ENCODE measurements at regions of chr22 and their contacts with region 1.

Region 1: DNA sequence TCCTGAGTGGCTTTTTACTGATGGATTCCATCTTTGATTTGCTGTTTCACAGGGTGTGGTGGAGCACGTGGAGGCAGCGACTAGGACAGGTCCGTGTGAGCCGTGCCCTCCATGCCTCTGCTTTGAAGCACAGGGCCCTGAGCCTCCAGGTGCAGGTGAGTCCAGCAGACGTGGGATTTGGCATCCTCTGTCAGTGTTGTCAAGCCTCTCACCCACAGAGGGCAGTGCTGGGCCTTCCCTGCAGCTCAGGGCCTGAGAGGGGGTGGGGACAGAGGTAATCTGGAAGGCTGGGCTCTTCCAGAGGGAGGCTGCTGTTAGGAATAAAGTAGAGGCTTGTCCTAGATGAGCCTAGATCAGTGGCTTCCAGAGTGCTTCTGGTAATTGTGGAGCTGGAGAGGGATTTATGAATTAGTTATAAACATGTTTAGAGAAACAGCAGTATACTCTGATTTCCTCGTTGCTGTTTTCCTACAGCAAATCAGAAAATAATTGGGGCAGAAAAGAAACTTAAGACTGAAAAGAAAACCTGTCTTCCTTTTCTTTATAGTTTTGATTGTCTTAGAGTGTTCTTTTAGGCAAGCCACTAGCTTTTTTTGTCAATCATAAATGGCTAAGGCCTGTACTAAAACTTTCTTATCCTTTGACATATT is 65.0 kb downstream of the SFI1 start:
- DNase-seq: peak; percentile 86
- H3K4me3 Mint-ChIP-seq: no peak overlapping the region
- H3K27ac Mint-ChIP-seq: peak overlapping the region; percentile 71
- H3K4me1 Mint-ChIP-seq: peaks cover 12% of the 10 kb centered on the region
- H3K27me3 Mint-ChIP-seq: no peaks in the 10 kb centered on the region

Region 2: GRCh38 chr22:31595271-31595670 is 33.9 kb after region 1 on chr22:
- intact Hi-C with region 1: loop called (anchors 5 kb)
- DNase-seq: no peak
- H3K4me3 Mint-ChIP-seq: no peak overlapping the region
- H3K27ac Mint-ChIP-seq: peak overlapping the region; percentile 4
- H3K4me1 Mint-ChIP-seq: no peaks in the 10 kb centered on the region
- H3K27me3 Mint-ChIP-seq: no peaks in the 10 kb centered on the region

Region 3: GRCh38 chr22:31635638-31636306 is 74.4 kb after region 1 on chr22:
- intact Hi-C with region 1: loop called (anchors 2 kb)
- DNase-seq: peak; percentile 58
- H3K4me3 Mint-ChIP-seq: no peak overlapping the region
- H3K27ac Mint-ChIP-seq: no peak overlapping the region
- H3K4me1 Mint-ChIP-seq: peaks cover 31% of the 10 kb centered on the region
- H3K27me3 Mint-ChIP-seq: no peaks in the 10 kb centered on the region